Activated CD4-positive, alpha-beta memory T cell treated with anti-CD3 and anti-CD28 coated beads for 36 hours (primary cell): ENCODE measurements at regions of chr3 and their contacts with region 1.

Region 1: DNA sequence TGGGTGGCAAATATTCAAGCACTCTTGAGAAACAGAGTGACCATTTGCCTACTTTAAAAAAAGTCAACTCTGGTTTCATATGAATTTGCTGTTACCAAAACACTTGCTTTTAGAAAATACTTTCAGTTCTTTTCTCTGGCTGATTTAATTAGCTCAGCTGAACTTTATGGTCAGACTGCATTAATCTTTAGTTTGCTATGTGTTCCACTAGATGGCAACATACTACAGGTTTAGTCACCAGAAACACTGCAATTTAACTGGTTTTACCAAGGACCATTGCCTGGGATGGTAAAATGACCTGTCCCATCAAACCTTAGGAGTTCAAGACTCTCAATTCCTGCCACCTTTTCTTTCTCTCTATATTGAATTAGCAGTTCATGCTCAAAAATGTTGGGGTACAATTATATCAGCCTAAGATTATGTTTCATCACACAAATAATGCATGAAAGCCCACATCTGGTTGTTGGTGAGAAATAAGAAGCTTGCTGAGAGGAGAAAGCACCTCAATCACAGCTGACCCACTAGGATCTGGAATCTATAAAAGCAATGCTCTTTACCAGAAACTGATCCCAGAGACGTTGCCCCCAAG is 14.2 kb downstream of the EIF4E3 start:
- DNase-seq: no peak
- H3K4me3 Mint-ChIP-seq: no peak overlapping the region
- H3K27ac Mint-ChIP-seq: no peak overlapping the region
- H3K4me1 Mint-ChIP-seq: peaks cover 70% of the 10 kb centered on the region
- H3K27me3 Mint-ChIP-seq: no peaks in the 10 kb centered on the region

Region 2: GRCh38 chr3:71784914-71785531 is 74.0 kb after region 1 on chr3 and contains the start of gene PROK2:
- CTCF ChIA-PET with region 1: interaction called, 6 read pairs
- POLR2A ChIA-PET with region 1: no interaction called
- intact Hi-C with region 1: loop called (anchors 2 kb)
- DNase-seq: peak; percentile 59
- H3K4me3 Mint-ChIP-seq: peak within 1 kb of the TSS; percentile 61
- H3K27ac Mint-ChIP-seq: no peak within 1 kb of the TSS
- H3K4me1 Mint-ChIP-seq: peaks cover 17% of the 10 kb centered on the region
- H3K27me3 Mint-ChIP-seq: peaks cover 58% of the 10 kb centered on the region
- total RNA-seq, gene PROK2: 0.26 to 0.44 TPM

Region 3: DNA sequence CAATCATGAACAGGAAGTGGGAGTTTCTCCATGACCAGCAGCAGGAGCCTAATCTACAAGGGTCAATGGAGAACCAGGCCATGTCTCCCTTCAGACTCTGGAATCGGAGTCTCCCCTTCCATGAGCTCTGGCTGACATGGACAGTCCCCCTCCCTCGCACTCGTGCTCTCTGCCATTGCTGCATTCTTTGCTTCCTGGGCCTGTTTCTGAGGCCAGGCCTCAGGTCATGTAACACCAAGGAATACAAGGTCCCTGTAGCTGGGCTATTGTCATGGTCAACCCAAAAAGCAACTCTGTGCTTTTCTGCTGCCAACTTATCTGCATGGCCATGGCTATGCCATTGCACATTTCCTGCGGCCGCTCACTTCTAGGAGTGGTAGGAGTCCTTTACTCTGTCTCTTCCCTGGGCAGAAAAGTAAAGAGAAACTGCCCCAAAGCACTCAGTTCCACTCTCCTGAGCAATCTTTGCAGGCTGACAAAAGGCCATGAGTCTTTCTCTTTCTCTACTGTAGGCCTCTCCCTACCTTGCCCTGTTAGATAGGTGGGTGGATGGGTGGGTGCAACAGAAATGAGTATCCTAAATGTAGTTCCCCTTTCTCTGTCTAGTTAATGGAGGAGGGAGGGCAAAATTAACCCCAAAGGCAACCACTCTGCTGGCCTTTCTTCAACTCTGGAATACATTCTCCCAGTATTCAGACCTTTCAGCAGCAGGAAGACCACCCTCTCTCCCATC is 114.7 kb after region 1 on chr3:
- CTCF ChIA-PET with region 1: no interaction called
- POLR2A ChIA-PET with region 1: no interaction called
- intact Hi-C with region 1: no loop called
- DNase-seq: no peak
- H3K4me3 Mint-ChIP-seq: no peak overlapping the region
- H3K27ac Mint-ChIP-seq: no peak overlapping the region
- H3K4me1 Mint-ChIP-seq: peaks cover 4% of the 10 kb centered on the region
- H3K27me3 Mint-ChIP-seq: peaks cover 4% of the 10 kb centered on the region

Region 4: GRCh38 chr3:71859123-71859519 is 148.1 kb after region 1 on chr3:
- CTCF ChIA-PET with region 1: interaction called, 23 read pairs
- POLR2A ChIA-PET with region 1: no interaction called
- intact Hi-C with region 1: loop called (anchors 1 kb)
- DNase-seq: no peak
- H3K4me3 Mint-ChIP-seq: no peak overlapping the region
- H3K27ac Mint-ChIP-seq: no peak overlapping the region
- H3K4me1 Mint-ChIP-seq: peaks cover 15% of the 10 kb centered on the region
- H3K27me3 Mint-ChIP-seq: peaks cover 27% of the 10 kb centered on the region